Breast epithelium (tissue), 4 donors: ENCODE measurements at regions of chr14 and their contacts with region 1.

Region 1: GRCh38 chr14:51283402-51284085 is 43.5 kb downstream of the TMX1 start:
- DNase-seq: no peak
- H3K4me3 ChIP-seq: no peak overlapping the region
- H3K27ac ChIP-seq: peak overlapping the region; percentile 43 to 57
- H3K4me1 ChIP-seq: no peaks in the 10 kb centered on the region
- H3K27me3 ChIP-seq: no peaks in the 10 kb centered on the region
- CTCF ChIP-seq: peak; percentile 94 to 97 (median 96)
- POLR2A ChIP-seq: no peak

Region 2: DNA sequence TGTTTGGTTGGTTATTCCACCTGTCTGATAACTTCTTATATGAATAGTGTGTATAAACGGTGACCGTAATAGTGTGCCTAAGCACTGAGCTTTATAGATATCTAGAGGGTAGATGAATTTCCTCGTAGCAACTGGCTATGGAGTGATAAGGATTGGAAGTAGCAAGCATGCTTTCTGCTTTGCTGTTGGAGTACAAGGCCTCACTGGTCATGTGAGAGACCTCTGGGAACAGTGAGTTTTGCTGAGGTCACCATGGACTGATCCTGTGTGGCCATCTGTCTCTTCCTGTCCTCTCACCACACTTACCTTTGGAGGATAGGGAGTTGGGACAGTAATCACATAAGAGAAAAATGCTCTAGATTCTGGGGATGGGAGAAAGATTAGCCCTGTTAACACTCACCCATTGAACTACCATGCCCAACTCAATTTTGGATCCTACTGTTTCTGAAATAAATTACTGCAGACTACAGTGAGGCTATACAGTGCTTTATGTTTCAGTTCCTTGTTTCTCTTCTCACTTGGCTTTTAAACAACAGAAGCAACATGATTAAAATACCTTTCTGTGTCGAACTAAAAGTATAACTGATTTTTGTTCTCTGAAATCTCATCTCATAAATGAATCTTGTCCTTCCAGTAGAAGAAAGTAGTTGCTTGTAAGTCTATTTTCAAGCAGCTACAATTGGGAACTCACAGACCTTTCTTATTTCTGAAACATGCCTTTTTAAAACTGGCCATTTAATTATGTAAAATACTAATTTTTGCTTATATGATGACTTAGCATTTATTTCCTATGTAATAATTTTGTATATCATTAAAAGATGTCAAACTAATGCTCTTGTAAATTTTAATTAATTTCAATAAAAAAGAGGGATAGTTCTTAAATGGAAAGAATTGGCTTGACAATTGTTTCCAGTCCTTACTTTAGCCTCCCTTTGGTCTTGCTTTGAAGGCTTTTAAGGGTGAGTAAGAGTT is 35.2 kb before region 1 on chr14:
- intact Hi-C with region 1: no loop called
- DNase-seq: no peak
- H3K4me3 ChIP-seq: no peak overlapping the region
- H3K27ac ChIP-seq: no peak overlapping the region
- H3K4me1 ChIP-seq: peaks cover 0 to 3% of the 10 kb centered on the region in 2 donors
- H3K27me3 ChIP-seq: no peaks in the 10 kb centered on the region
- CTCF ChIP-seq: no peak
- POLR2A ChIP-seq: no peak

Region 3: GRCh38 chr14:51357250-51357649 is 73.7 kb after region 1 on chr14:
- intact Hi-C with region 1: no loop called
- DNase-seq: no peak
- H3K4me3 ChIP-seq: no peak overlapping the region
- H3K27ac ChIP-seq: peak overlapping the region; percentile 65 to 66
- H3K4me1 ChIP-seq: no peaks in the 10 kb centered on the region
- H3K27me3 ChIP-seq: no peaks in the 10 kb centered on the region
- CTCF ChIP-seq: no peak
- POLR2A ChIP-seq: no peak

Region 4: DNA sequence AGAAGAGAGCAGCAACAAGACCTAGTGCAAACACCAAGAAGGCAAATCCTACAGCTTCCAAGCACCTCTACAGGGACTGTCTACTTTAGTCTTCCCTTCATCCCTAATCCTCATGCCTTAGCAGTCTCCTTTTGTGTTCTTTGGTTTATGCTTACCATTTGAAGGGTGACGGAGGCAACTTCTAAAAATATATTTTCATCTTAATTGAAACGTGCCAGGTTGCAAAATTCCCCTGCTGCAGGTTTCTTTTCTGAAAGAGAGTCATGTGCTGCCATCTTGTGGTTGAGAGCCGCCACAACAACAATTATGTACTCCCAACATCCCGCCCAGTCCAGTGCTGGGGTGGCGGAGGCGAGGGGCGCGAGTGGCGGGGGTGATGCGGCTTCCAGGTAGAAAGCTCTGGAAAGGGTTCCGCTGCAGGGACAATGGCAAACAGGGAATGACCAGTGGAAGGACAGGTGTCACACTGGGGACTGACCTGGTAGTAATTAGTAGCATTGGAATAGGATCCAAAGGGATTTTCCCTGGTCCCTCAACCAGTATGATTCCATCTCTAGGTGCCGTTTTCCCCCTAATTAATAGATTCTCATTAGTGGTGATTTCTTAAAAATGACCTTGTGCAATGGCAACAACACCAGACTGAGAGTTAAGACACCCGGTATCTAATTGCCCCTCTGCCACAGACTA is 496.6 kb after region 1 on chr14:
- intact Hi-C with region 1: loop called (anchors 2 kb)
- DNase-seq: peak; percentile 56 to 67
- H3K4me3 ChIP-seq: no peak overlapping the region
- H3K27ac ChIP-seq: no peak overlapping the region
- H3K4me1 ChIP-seq: no peaks in the 10 kb centered on the region
- H3K27me3 ChIP-seq: no peaks in the 10 kb centered on the region
- CTCF ChIP-seq: peak; percentile 74 to 91 (median 85)
- POLR2A ChIP-seq: no peak

Region 5: DNA sequence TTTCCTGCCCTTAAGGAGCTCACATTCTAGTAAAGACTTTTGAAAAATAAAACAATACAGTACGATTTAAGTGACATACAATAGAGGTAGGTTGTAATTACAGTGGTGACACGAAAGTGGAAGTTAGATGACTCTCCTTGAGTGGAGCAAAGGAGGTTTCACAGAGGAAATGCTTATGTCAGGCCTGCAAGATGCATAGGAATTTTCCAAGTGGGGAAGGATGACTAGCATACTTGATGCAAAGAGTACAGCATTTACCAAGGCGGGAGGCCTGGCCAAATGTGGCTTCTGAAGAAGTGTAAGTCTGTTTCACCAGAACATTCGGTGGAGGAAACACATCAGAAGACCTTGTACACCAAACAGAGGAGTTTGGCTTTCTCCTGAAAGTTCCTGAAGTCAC is 1356.6 kb after region 1 on chr14:
- intact Hi-C with region 1: no loop called
- DNase-seq: no peak
- H3K4me3 ChIP-seq: no peak overlapping the region
- H3K27ac ChIP-seq: no peak overlapping the region
- H3K4me1 ChIP-seq: no peaks in the 10 kb centered on the region
- H3K27me3 ChIP-seq: no peaks in the 10 kb centered on the region
- CTCF ChIP-seq: no peak
- POLR2A ChIP-seq: no peak